Activated CD8-positive, alpha-beta T cell treated with anti-CD3 and anti-CD28 coated beads for 36 hours (primary cell): ENCODE measurements at regions of chr19 and their contacts with region 1.

Region 1: DNA sequence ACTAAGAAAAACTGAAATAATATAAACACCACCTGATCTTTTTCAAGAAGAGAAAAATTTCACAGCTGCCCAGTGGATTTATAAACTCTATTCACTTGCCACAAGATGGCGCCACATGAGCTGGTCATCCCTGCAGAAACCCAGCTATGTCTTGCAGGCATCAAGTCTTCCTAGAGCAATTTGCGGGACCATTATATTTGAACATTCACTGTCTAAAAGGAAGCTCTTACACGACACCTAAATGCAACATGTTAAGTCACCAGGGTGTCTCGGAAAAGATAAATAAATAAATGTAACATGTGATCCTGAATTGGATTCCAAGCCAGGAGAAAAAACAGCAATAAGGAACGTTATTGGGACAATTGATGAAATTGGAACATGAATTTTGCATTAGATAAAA is 20.3 kb upstream of the AKT2 start:
- DNase-seq: peak; percentile 82
- ATAC-seq: peak; percentile 68
- H3K4me3 Mint-ChIP-seq: no peak overlapping the region
- H3K27ac Mint-ChIP-seq: no peak overlapping the region
- H3K4me1 Mint-ChIP-seq: peaks cover 2% of the 10 kb centered on the region
- H3K27me3 Mint-ChIP-seq: no peaks in the 10 kb centered on the region
- CTCF ChIP-seq: peak; percentile 82

Region 2: GRCh38 chr19:40165362-40165937 is 140.0 kb before region 1 on chr19:
- CTCF ChIA-PET with region 1: no interaction called
- POLR2A ChIA-PET with region 1: no interaction called
- intact Hi-C with region 1: no loop called
- DNase-seq: peak; percentile 83
- ATAC-seq: peak; percentile 95
- H3K4me3 Mint-ChIP-seq: no peak overlapping the region
- H3K27ac Mint-ChIP-seq: no peak overlapping the region
- H3K4me1 Mint-ChIP-seq: peaks cover 14% of the 10 kb centered on the region
- H3K27me3 Mint-ChIP-seq: no peaks in the 10 kb centered on the region
- CTCF ChIP-seq: peak; percentile 79

Region 3: GRCh38 chr19:40200341-40201099 is 104.9 kb before region 1 on chr19:
- CTCF ChIA-PET with region 1: no interaction called
- POLR2A ChIA-PET with region 1: no interaction called
- intact Hi-C with region 1: no loop called
- DNase-seq: no peak
- ATAC-seq: no peak
- H3K4me3 Mint-ChIP-seq: no peak overlapping the region
- H3K27ac Mint-ChIP-seq: no peak overlapping the region
- H3K4me1 Mint-ChIP-seq: no peaks in the 10 kb centered on the region
- H3K27me3 Mint-ChIP-seq: no peaks in the 10 kb centered on the region
- CTCF ChIP-seq: no peak

Region 4: DNA sequence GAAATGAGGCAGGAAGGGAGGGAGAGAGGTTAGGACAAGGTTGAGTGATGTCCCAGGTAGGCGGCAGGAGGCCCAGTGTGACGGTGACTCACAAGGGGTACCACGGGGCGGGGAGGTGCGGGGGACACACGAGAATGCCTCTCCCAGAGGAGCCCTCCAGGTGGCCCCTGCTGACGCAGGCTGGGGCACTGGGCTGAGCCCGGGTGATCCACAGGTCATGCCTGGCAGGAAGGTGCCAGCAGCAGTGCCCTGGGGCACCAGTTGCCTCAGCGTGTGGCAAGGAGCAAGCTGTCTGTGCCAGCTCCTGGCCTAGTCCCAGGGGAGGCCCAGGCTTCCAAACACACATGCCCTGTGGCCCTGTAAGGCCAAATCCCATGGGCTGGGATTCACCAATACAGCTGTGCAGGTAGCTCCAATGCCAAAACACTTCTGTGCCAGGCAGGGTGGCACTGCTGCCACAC is 48.3 kb before region 1 on chr19:
- CTCF ChIA-PET with region 1: no interaction called
- POLR2A ChIA-PET with region 1: no interaction called
- intact Hi-C with region 1: no loop called
- DNase-seq: no peak
- ATAC-seq: no peak
- H3K4me3 Mint-ChIP-seq: no peak overlapping the region
- H3K27ac Mint-ChIP-seq: no peak overlapping the region
- H3K4me1 Mint-ChIP-seq: peaks cover 26% of the 10 kb centered on the region
- H3K27me3 Mint-ChIP-seq: no peaks in the 10 kb centered on the region
- CTCF ChIP-seq: no peak

Region 5: GRCh38 chr19:40320546-40320910 is 15.1 kb after region 1 on chr19:
- CTCF ChIA-PET with region 1: interaction called, 16 read pairs
- POLR2A ChIA-PET with region 1: interaction called, 3 read pairs
- intact Hi-C with region 1: no loop called
- DNase-seq: no peak
- ATAC-seq: no peak
- H3K4me3 Mint-ChIP-seq: no peak overlapping the region
- H3K27ac Mint-ChIP-seq: no peak overlapping the region
- H3K4me1 Mint-ChIP-seq: no peaks in the 10 kb centered on the region
- H3K27me3 Mint-ChIP-seq: no peaks in the 10 kb centered on the region
- CTCF ChIP-seq: no peak

Region 6: GRCh38 chr19:40425450-40426287 is 120.3 kb after region 1 on chr19 and contains the start of gene SERTAD1:
- CTCF ChIA-PET with region 1: interaction called, 28 read pairs
- POLR2A ChIA-PET with region 1: no interaction called
- intact Hi-C with region 1: no loop called
- DNase-seq: peak; percentile 100
- ATAC-seq: peak; percentile 93
- H3K4me3 Mint-ChIP-seq: peak within 1 kb of the TSS; percentile 97
- H3K27ac Mint-ChIP-seq: peak within 1 kb of the TSS; percentile 96
- H3K4me1 Mint-ChIP-seq: peaks cover 12% of the 10 kb centered on the region
- H3K27me3 Mint-ChIP-seq: no peaks in the 10 kb centered on the region
- CTCF ChIP-seq: no peak
- total RNA-seq, gene SERTAD1: 15.5 to 17.2 TPM

Region 7: DNA sequence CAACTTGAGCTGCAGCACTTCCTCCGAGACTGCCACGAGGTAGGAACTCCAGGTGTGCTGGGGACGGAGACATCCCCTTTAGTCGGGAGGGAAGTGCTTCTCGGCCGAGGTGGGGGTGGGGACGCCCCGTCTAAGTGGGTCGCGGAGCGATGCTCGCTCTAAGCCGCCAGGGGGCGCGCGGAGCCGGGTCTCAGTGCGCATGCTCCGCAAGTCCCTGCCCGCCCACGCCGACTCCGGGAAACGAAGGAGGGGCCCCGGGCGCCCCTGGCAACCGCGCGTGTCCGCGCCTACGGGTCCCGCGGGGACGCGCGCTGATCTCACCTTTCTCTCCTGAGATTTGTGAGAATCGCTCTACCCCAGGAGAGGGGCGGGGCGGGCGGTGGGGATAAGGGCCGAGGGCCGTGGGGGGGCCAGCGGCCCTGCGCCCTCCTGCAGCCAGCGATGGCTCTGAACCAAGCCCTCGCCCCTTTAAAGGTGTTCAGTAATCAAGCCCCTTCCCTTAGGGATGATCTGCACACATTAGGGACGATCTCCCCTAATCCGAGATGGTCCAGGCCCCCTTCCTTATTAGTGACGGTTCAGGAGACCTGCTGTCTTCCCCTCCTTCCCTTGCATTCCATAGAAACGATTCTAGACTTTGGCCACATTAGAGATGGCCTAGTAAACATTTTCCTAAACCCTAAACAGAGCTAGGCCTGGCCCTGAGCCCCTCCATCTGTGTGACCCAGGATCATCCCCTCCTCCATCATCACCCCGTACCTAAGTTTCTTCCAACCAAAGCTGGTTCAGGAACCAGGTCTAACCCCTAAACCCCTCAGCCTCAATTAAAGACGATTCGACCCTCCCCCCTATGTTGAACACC is 223.9 kb after region 1 on chr19:
- CTCF ChIA-PET with region 1: no interaction called
- POLR2A ChIA-PET with region 1: no interaction called
- intact Hi-C with region 1: loop called (anchors 10 kb)
- DNase-seq: peak; percentile 91
- ATAC-seq: peak; percentile 90
- H3K4me3 Mint-ChIP-seq: peak overlapping the region; percentile 38
- H3K27ac Mint-ChIP-seq: no peak overlapping the region
- H3K4me1 Mint-ChIP-seq: peaks cover 12% of the 10 kb centered on the region
- H3K27me3 Mint-ChIP-seq: peaks cover 20% of the 10 kb centered on the region
- CTCF ChIP-seq: peak; percentile 99